ENCODE measurements at regions of chr5 and their contacts with region 1.

Region 1: DNA sequence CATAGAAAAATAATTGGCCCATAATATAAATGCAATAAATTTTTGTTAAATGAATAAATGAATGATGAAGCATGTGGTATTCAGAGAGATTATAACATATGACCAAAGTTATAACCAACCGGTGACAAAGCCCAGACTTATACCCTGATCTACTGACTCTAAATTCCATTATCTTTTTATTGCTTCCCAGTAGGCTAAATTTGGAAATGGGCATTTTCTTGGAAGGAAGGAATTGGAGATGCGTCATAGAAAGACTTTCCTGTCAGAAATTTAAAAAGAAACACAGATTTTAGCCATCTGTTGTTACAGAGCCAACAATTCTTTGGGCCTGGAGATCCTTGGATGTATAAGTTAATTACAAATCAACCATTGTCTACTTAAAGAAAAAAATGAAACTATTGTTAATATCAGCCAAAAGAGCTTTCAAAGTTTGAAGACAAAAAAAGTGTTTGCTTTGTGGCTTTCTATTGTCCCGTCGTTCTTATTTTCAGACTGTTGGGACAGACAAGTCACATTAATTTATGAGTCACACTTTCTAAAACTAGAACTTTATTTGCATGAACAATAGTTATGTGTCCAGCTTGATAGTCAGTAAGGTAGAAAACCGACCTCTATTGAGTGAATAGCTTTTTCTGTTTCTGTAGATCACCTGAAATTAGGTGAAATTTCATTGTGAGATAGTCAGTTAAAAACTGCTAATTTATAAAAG is 428.7 kb downstream of the GABRG2 start:
- DNase-seq: no peak
- ATAC-seq: no peak
- H3K4me3 ChIP-seq: no peak overlapping the region
- H3K27ac ChIP-seq: no peak overlapping the region
- H3K4me1 ChIP-seq: no peaks in the 10 kb centered on the region
- H3K27me3 ChIP-seq: no peaks in the 10 kb centered on the region
- CTCF ChIP-seq: no peak
- POLR2A ChIP-seq: no peak
- RAD21 ChIP-seq: no peak

Region 2: DNA sequence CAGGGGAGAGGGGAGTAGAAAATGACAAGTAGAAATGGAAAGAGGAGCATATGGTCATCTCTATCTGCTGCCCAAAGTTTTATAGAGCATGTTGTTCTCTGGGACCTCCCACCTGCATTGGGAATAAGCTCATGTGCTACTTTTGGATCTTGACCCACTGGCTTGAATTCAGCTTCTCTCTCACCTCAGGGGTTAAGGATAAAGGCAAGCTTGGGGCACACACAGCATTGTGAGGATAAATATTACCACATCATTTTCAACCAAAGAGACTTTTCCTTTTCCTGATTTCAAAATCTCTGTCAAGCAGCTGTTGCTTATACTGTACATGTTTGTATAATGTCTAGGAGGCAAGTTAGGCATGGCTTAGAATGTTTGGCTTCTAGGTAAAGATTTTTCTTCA is 1660.9 kb before region 1 on chr5:
- CTCF ChIA-PET with region 1: no interaction called
- POLR2A ChIA-PET with region 1: no interaction called
- dilution Hi-C with region 1: no loop called
- in situ Hi-C with region 1: no loop called
- intact Hi-C with region 1: loop called (anchors 10 kb)
- DNase-seq: no peak
- ATAC-seq: no peak
- H3K4me3 ChIP-seq: no peak overlapping the region
- H3K27ac ChIP-seq: no peak overlapping the region
- H3K4me1 ChIP-seq: no peaks in the 10 kb centered on the region
- H3K27me3 ChIP-seq: no peaks in the 10 kb centered on the region
- CTCF ChIP-seq: no peak
- POLR2A ChIP-seq: no peak
- RAD21 ChIP-seq: no peak

Region 3: DNA sequence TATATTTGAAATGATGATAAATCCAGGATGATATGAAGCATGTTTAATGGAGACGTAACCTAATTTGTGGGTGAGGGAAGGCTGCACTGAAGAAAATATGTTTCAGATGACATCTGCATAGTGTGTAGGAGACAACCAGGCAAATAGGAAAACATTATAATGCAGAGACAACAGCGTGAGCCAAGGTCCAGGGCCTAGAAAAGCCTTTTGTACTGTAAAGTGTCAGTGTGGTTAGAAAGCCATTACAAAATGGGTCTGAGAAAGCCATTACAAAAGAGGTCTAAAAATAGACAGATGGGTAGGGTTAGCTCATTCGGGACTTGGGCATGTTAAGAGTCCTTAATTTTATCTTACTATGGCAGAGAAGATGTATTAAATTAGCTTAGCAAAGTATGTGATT is 443.6 kb before region 1 on chr5:
- CTCF ChIA-PET with region 1: no interaction called
- POLR2A ChIA-PET with region 1: no interaction called
- dilution Hi-C with region 1: no loop called
- in situ Hi-C with region 1: no loop called
- intact Hi-C with region 1: no loop called
- DNase-seq: no peak
- ATAC-seq: no peak
- H3K4me3 ChIP-seq: no peak overlapping the region
- H3K27ac ChIP-seq: no peak overlapping the region
- H3K4me1 ChIP-seq: no peaks in the 10 kb centered on the region
- H3K27me3 ChIP-seq: no peaks in the 10 kb centered on the region
- CTCF ChIP-seq: no peak
- POLR2A ChIP-seq: no peak
- RAD21 ChIP-seq: no peak

Measured in IMR-90 (cell line).